Dorsolateral prefrontal cortex (tissue), 120 donors: ENCODE measurements at regions of chr2 and their contacts with region 1.

Region 1: GRCh38 chr2:30711646-30712085 is 95.6 kb downstream of the CAPN13 start:
- DNase-seq: peak; percentile 42 to 90 (median 76)
- H3K4me3 ChIP-seq: no peak overlapping the region
- H3K27ac ChIP-seq: no peak overlapping the region
- H3K27me3 ChIP-seq: no peaks in the 10 kb centered on the region
- CTCF ChIP-seq: peak; percentile 74 to 100 (median 98)

Region 2: DNA sequence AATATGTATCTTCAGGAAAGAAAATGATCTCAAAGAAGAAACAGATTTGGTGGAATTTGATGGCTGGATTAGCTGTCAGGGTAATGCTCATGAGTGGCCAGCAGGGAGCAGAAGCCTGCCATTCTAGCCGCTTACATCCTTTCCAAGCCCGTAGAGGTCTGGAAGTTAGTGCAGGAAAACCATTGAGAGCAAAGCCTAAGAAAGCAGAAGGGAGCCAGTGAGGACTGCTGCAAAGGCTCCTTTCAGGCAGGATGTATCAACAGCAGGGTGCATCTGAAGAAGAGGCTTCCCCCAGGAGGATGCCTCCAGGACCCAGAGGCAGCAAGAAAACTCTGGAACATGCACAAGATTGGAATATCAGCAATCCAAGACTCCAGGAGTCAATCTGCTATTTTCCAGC is 503.2 kb before region 1 on chr2:
- intact Hi-C with region 1: loop called (anchors 1 to 2 kb)
- DNase-seq: peak in 9 of 10 donors; percentile 49 to 73 (median 65)
- H3K4me3 ChIP-seq: no peak overlapping the region
- H3K27ac ChIP-seq: peak overlapping the region in 1 of 59 donors; percentile 6
- H3K27me3 ChIP-seq: no peaks in the 10 kb centered on the region
- CTCF ChIP-seq: peak; percentile 74 to 98 (median 91)

Region 3: DNA sequence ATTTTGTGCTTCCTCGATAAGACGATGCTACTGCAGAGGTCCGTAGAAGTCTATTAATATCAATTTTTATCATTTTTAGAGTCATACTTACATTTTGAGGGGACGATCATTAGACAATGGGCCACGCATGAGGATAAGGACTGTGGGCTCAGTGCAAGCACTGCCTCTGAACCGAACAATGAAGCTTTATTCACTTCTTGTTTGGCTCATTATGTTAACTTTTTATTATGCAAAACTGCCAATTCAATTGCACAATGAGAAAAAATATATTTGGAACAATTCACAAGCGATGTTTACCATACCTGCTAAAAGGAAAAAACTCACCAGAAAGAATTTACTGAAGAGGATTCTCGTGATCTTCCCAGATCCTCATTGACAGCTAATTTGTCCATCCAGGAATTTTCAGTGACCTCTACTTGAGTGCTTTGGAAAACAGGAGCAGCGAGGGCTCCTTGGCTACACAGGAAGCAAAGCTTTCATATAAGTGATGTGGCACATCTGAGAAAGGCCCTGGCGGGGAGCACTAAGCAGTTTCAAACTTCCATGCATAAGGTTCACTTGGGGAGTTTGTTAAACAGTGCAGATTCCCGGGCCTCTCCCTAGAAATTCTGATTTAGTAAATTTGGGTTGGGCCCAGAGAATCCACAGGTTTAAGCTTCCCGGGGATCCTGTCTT is 108.9 kb after region 1 on chr2:
- intact Hi-C with region 1: no loop called
- DNase-seq: peak in 1 of 10 donors; percentile 42
- H3K4me3 ChIP-seq: peak overlapping the region in 29 of 59 donors; percentile 3 to 48 (median 23)
- H3K27ac ChIP-seq: peak overlapping the region; percentile 58 to 99 (median 96)
- H3K27me3 ChIP-seq: no peaks in the 10 kb centered on the region
- CTCF ChIP-seq: peak in 2 of 56 donors; percentile 7 to 16

Region 4: DNA sequence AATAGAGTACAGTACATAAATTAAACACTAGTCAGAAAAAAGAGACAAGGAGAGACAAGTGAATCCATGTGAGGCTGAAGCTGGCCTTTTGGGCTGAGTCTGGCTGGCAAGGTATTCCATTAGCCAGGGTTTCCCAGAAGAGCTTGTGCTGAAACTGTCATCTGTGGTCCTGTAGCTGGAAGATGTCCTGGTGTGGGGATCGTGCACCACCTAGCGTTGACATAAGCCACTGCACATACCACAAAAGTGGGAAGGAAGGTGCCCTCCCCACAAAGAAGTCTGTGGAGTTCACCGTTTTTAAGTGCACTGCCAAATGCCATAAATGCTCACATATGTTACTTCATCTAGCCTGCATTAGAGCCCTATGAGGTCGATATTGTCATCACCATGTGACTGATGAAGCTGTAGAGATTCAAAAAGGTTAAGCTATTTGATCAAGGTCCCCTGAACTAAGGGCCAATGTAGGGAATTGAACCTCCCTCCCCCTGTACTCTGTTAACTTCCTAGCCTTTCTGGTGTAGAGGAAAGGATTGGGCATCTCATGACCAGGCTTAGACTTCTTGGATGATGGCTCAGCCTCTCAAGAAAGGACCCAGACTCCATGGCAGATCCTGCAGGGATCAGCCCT is 458.5 kb after region 1 on chr2:
- intact Hi-C with region 1: loop called (anchors 2 kb)
- DNase-seq: peak; percentile 49 to 81 (median 66)
- H3K4me3 ChIP-seq: no peak overlapping the region
- H3K27ac ChIP-seq: no peak overlapping the region
- H3K27me3 ChIP-seq: peaks cover 0 to 17% (median 0%) of the 10 kb centered on the region in 45 donors
- CTCF ChIP-seq: peak; percentile 68 to 97 (median 93)

Region 5: DNA sequence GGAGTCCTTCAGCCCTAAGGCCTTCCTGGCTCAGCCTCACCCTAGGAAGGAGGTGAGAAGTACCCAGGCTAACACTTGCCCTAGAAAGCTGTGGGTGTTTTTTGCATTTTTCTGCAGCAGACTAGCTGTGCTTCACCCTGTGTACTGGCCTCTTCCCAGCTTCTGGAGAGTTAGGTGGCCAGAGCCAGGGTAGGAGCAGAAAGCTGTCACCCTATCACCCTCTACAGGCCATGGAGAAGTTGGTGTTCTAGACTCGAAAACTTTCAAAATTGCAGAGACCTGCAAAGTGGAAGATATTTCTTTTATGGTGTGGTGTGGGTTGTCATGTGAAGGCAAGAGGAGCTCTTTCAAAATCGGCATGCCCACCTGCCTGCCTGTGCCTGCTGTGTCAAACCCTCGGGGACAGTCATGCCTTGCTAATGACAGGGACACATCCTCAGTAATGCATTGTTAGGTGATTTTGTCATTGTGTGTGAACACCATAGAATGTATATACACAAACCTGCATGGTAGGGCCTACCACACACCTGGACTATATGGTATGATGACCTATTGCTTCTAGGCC is 552.1 kb after region 1 on chr2:
- intact Hi-C with region 1: loop called in 1 of 2 experiments (anchors 2 kb)
- DNase-seq: no peak
- H3K4me3 ChIP-seq: no peak overlapping the region
- H3K27ac ChIP-seq: peak overlapping the region in 29 of 59 donors; percentile 7 to 65 (median 37)
- H3K27me3 ChIP-seq: no peaks in the 10 kb centered on the region
- CTCF ChIP-seq: peak in 36 of 56 donors; percentile 7 to 58 (median 24)

Region 6: DNA sequence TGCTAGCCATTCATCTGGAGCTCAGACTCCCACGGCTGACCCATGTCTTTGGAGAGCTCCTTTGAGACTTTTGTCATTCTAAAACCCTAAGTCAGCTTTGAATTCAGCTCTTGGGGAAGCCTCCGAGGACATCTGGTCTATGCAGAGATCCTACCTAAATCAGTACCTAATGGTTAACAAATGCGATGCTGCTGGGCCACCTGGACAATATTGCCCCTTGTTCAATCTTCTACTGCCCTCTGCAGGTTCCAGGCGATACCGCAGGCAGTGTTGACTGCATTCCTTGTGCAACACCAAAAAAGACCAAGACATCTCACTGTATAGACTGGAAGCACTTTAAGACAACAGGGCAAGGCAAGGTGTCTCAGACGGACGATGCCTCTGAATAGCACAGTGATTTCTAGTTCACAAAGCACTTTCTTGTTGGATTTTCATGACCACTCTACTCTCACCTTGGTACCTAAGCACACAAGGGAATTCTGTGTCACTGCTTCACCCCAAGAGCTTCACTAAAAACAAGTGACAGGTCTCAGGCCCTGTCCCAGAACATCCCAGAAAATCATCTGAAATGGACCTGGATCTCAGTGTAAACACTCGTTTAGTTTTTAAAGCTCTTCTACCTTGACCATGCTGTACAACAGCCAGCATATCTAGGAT is 622.0 kb after region 1 on chr2:
- intact Hi-C with region 1: loop called (anchors 2 to 5 kb)
- DNase-seq: peak; percentile 69 to 90 (median 80)
- H3K4me3 ChIP-seq: no peak overlapping the region
- H3K27ac ChIP-seq: peak overlapping the region in 1 of 59 donors; percentile 13
- H3K27me3 ChIP-seq: peaks cover 0 to 6% (median 0%) of the 10 kb centered on the region in 45 donors
- CTCF ChIP-seq: peak; percentile 75 to 98 (median 95)